Left cardiac atrium (tissue), 4 donors: ENCODE measurements at regions of chr22 and their contacts with region 1.

Region 1: DNA sequence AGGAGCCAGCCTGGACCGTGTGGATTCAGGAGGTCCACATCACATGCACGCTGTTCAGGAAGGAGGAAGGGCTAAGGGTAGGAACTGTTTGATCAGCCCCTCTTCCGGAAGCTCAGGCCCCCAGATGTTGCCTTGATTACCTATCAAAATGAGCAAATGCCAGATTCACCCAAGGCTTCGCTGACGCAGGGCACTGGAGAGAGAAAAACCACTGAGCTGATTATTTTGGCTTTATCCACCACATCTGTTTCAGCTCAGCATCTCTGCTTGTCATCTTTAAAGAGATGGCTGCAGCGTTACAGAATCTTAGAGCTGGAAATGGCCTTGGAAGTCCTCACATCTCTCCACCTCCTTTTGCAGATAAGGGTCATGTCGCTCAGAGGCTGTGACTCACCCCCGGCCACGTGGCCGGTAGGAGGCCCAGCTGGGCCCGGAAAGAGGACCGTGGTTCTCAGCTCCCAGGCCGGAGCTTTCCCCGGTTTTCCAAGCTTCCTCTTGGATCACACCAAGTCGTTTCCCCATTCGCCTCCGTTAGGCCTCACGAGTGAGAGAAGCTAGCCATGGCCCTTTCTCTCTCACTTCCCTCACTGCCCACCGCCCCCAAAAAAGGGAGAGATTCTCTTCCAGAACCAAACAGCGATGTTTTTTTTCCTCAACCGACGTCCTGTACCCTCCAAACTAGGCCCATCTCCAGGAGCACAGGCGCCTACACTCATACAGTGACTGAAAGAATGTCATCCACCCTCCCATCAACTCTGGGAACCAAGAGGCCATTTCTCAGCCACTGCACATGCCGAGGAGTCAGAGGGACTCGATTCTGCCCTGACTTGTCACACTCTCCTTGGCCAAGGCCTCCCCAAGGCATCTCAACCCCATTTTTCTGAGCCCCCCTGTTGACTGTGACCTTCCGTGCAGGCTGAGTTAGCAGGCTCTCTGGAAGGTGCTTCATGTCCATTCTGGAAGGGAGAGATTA is 37.6 kb downstream of the LIF start:
- DNase-seq: peak; percentile 87
- ATAC-seq: peak; percentile 67 to 71

Region 2: DNA sequence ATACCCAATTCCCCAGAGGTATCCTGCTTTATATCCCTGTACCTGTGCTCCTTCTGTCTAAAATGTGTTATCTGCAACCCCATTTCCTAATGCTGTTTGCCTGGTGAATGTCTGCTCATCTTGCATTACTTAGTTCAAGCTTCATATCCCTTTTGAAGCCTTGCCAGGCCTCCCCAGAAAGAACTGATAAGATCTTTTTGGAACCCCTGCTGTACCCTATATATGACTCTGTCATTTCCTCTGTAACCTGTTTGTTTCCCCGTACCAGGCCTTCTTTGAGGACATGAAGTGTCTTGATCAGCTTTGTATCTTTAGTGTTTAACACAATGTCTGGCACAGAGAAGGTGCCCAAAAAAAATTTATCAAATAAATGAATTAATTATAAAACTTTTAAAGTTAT is 39.9 kb before region 1 on chr22:
- intact Hi-C with region 1: no loop called
- DNase-seq: no peak
- ATAC-seq: no peak

Region 3: DNA sequence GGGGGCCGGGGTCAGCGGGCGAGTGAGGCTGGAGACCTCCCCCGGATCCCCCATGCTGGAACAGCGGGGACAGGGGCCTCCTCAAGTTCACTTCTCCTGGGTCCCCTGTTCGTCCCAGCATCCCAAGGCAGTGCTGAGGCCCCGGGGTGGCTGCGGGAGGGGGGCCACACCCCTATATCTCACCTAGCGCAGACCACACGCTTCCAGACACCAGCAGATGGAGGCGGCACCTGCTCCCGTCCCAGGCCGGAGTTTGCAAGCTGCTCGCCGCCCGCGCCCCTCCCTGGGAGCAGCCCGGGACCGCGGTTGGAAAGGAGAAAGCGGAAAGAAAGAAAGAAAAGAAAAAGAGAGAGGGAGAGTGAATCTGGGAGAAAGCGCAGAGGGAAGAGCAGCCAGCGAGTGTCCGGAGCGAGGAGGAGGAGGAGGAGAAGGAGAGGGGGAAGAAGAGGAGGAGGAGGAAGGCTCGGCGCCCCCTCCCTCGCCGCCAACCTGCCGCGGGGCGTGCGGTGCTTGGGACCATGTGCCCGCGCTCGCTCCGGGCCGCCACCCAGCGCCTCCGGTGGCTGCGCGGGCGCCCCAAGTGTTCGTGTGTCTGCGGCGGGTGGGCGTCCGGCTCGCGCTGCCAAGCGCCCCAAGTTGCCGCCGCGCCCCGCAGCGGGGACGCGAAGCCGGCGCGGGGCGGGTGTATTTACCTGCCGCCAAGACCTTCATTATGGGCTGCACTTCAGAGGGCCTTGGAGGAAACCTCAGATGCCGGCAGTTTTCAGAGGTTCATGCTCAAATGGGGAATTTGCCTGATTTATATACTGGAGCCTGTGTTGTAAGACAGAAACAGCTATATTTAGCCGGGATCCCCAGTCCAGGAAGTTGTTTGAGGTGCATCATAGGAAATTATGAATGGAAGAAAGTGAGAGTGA is 37.3 kb after region 1 on chr22 and contains the start of gene LIF:
- intact Hi-C with region 1: loop called in 1 of 2 experiments (anchors 2 kb)
- DNase-seq: no peak
- ATAC-seq: peak; percentile 4 to 32
- total RNA-seq, gene LIF: 0.94 to 7.0 TPM